ENCODE measurements at regions of chr17 and their contacts with region 1.

Region 1: GRCh38 chr17:42609182-42609813 is at the starts of genes RETREG3 and TUBG1:
- DNase-seq: peak; percentile 97 to 100 (median 100)
- ATAC-seq: peak; percentile 95
- H3K4me3 ChIP-seq: peak within 1 kb of the TSS; percentile 85
- H3K4me3 Mint-ChIP-seq: peak within 1 kb of the TSS; percentile 95 to 100 (median 100)
- H3K27ac ChIP-seq: peak within 1 kb of the TSS; percentile 89
- H3K27ac Mint-ChIP-seq: peak within 1 kb of the TSS; percentile 94 to 100 (median 97)
- H3K4me1 ChIP-seq: peaks cover 30 to 37% of the 10 kb centered on the region in 2 donors
- H3K4me1 Mint-ChIP-seq: peaks cover 38 to 55% (median 41%) of the 10 kb centered on the region in 7 donors
- H3K27me3 ChIP-seq: no peaks in the 10 kb centered on the region
- H3K27me3 Mint-ChIP-seq: peaks cover 0 to 2% (median 0%) of the 10 kb centered on the region in 5 donors
- total RNA-seq, gene RETREG3: 53.3 to 132 (median 75.7) TPM
- total RNA-seq, gene TUBG1: 7.8 to 54.4 (median 12.5) TPM

Region 2: GRCh38 chr17:41966463-41967140 is 642.7 kb before region 1 on chr17 and contains the start of gene CNP:
- CTCF ChIA-PET with region 1: no interaction called
- POLR2A ChIA-PET with region 1: no interaction called
- intact Hi-C with region 1: loop called in 1 of 2 experiments (anchors 2 kb)
- DNase-seq: peak; percentile 84 to 94 (median 88)
- ATAC-seq: peak; percentile 94
- H3K4me3 ChIP-seq: peak within 1 kb of the TSS; percentile 87
- H3K4me3 Mint-ChIP-seq: peak within 1 kb of the TSS; percentile 78 to 93 (median 88)
- H3K27ac ChIP-seq: peak within 1 kb of the TSS; percentile 88
- H3K27ac Mint-ChIP-seq: peak within 1 kb of the TSS; percentile 83 to 96 (median 89)
- H3K4me1 ChIP-seq: peaks cover 10 to 16% of the 10 kb centered on the region in 2 donors
- H3K4me1 Mint-ChIP-seq: peaks cover 24 to 51% (median 36%) of the 10 kb centered on the region in 7 donors
- H3K27me3 ChIP-seq: no peaks in the 10 kb centered on the region
- H3K27me3 Mint-ChIP-seq: peaks cover 0 to 2% (median 0%) of the 10 kb centered on the region in 5 donors
- total RNA-seq, gene CNP: 29.6 to 86.3 (median 32.5) TPM

Region 3: DNA sequence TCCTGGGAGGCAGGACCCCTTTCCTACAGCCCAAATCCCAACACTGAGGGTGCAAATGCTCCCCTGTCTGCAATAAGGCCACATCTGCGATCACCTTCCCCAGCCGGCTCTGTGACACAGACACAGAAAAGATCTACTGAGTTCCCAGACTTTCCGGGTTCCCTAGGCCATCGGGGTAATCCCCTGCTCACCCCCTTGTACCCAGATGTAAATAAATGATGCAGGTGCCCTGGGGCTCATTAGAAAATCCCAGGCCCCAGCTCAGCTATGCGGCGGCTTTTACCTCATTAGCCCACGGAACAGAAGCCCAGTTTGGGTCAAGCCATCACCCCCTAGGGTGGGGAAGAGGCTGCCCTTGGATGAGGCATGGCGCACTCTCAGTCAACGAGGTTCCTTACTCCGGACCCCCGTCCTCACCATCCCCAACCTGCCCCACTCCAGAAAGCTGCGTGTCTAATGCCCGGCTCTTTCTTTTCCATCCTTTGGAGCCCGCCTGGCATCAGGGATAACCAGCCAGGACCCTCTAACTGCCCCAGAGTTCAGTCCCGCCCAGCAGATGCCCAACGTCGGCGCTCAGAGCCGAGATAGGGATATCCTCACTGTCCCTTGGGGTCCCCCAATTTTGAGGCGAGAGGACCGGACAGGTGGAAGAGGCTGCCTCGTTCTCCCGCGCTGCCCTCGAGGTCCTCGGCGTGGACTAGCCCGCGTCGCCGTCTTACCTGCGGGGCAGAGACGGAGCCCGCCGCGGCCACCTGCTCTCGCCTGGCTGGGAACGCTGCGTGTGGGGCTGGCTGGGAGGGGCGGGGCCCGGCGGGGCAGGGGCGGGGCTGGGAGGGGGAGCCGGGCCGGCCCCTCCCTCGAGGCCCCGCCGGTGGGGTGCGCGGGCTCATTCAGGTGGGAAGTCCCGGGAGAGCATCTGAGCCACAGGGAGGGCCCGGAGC is 511.3 kb before region 1 on chr17 and contains the start of gene ZNF385C:
- CTCF ChIA-PET with region 1: no interaction called
- POLR2A ChIA-PET with region 1: no interaction called
- intact Hi-C with region 1: no loop called
- DNase-seq: peak in 5 of 9 donors; percentile 24 to 59 (median 36)
- ATAC-seq: peak; percentile 79
- H3K4me3 ChIP-seq: peak within 1 kb of the TSS; percentile 39
- H3K4me3 Mint-ChIP-seq: peak within 1 kb of the TSS; percentile 38 to 78 (median 60)
- H3K27ac ChIP-seq: no peak within 1 kb of the TSS
- H3K27ac Mint-ChIP-seq: peak within 1 kb of the TSS in 1 of 9 donors; percentile 3
- H3K4me1 ChIP-seq: peaks cover 6 to 8% of the 10 kb centered on the region in 2 donors
- H3K4me1 Mint-ChIP-seq: peaks cover 0 to 12% (median 8%) of the 10 kb centered on the region in 7 donors
- H3K27me3 ChIP-seq: no peaks in the 10 kb centered on the region
- H3K27me3 Mint-ChIP-seq: peaks cover 0 to 26% (median 17%) of the 10 kb centered on the region in 5 donors
- total RNA-seq, gene ZNF385C: 0.15 to 0.45 (median 0.23) TPM in 4 of 5 experiments, not detected in the other

Region 4: DNA sequence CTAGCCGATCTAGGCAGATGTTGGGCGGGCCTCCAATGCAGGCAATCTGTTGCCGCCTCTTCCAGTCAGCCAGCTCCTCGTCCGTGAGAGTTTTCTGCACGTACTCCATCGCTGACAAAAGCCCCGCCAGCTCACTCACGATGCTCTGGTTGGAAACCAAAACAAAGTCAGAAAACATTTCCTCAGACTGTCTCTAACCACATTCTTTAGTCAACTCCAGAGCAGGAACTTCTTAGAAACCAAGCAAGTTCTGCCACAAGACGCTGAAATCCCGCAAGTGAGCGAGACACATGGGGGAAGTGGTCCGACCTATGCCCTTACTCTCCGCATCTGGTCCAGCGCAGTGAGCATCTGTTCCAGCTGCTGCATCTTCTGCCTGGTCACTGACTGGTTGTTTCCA is 271.9 kb before region 1 on chr17:
- CTCF ChIA-PET with region 1: no interaction called
- POLR2A ChIA-PET with region 1: no interaction called
- intact Hi-C with region 1: no loop called
- DNase-seq: peak; percentile 23 to 87 (median 80)
- ATAC-seq: peak; percentile 92
- H3K4me3 ChIP-seq: no peak overlapping the region
- H3K4me3 Mint-ChIP-seq: peak overlapping the region; percentile 52 to 84 (median 72)
- H3K27ac ChIP-seq: peak overlapping the region; percentile 77
- H3K27ac Mint-ChIP-seq: peak overlapping the region; percentile 85 to 98 (median 93)
- H3K4me1 ChIP-seq: peaks cover 11 to 29% of the 10 kb centered on the region in 2 donors
- H3K4me1 Mint-ChIP-seq: peaks cover 18 to 73% (median 38%) of the 10 kb centered on the region in 7 donors
- H3K27me3 ChIP-seq: no peaks in the 10 kb centered on the region
- H3K27me3 Mint-ChIP-seq: no peaks in the 10 kb centered on the region

Region 5: GRCh38 chr17:42422958-42423712 is 186.2 kb before region 1 on chr17 and contains the start of gene CAVIN1:
- CTCF ChIA-PET with region 1: no interaction called
- POLR2A ChIA-PET with region 1: no interaction called
- intact Hi-C with region 1: no loop called
- DNase-seq: peak in 1 of 9 donors; percentile 49
- ATAC-seq: peak; percentile 38
- H3K4me3 ChIP-seq: peak within 1 kb of the TSS; percentile 65
- H3K4me3 Mint-ChIP-seq: peak within 1 kb of the TSS; percentile 83 to 96 (median 88)
- H3K27ac ChIP-seq: no peak within 1 kb of the TSS
- H3K27ac Mint-ChIP-seq: peak within 1 kb of the TSS in 5 of 9 donors; percentile 28 to 69 (median 46)
- H3K4me1 ChIP-seq: peaks cover 0 to 14% of the 10 kb centered on the region in 2 donors
- H3K4me1 Mint-ChIP-seq: peaks cover 6 to 29% (median 14%) of the 10 kb centered on the region in 7 donors
- H3K27me3 ChIP-seq: peaks cover 6 to 9% of the 10 kb centered on the region in 2 donors
- H3K27me3 Mint-ChIP-seq: peaks cover 0 to 65% (median 14%) of the 10 kb centered on the region in 5 donors
- total RNA-seq, gene CAVIN1: 0.32 to 3.8 (median 1.1) TPM in 3 of 5 experiments, not detected in the others

Region 6: DNA sequence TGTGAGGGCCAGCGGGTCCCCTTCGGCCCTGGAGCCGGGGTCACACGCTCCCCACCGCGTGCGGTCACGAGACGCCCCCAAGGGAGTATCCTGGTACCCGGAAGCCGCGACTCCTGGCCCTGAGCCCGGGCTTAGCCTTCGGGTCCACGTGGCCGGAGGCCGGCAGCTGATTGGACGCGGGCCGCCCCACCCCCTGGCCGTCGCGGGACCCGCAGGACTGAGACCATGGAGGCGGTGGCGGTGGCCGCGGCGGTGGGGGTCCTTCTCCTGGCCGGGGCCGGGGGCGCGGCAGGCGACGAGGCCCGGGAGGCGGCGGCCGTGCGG is 73.3 kb before region 1 on chr17 and contains the start of gene NAGLU:
- CTCF ChIA-PET with region 1: no interaction called
- POLR2A ChIA-PET with region 1: interaction called, 3 read pairs
- intact Hi-C with region 1: loop called in 1 of 2 experiments (anchors 2 kb)
- DNase-seq: peak; percentile 56 to 93 (median 69)
- ATAC-seq: peak; percentile 91
- H3K4me3 ChIP-seq: peak within 1 kb of the TSS; percentile 71
- H3K4me3 Mint-ChIP-seq: peak within 1 kb of the TSS; percentile 75 to 96 (median 86)
- H3K27ac ChIP-seq: peak within 1 kb of the TSS; percentile 57
- H3K27ac Mint-ChIP-seq: peak within 1 kb of the TSS; percentile 36 to 92 (median 79)
- H3K4me1 ChIP-seq: peaks cover 14 to 24% of the 10 kb centered on the region in 2 donors
- H3K4me1 Mint-ChIP-seq: peaks cover 29 to 50% (median 42%) of the 10 kb centered on the region in 7 donors
- H3K27me3 ChIP-seq: no peaks in the 10 kb centered on the region
- H3K27me3 Mint-ChIP-seq: peaks cover 0 to 9% (median 0%) of the 10 kb centered on the region in 5 donors
- total RNA-seq, gene NAGLU: 18.0 to 27.1 (median 22.3) TPM

Region 7: DNA sequence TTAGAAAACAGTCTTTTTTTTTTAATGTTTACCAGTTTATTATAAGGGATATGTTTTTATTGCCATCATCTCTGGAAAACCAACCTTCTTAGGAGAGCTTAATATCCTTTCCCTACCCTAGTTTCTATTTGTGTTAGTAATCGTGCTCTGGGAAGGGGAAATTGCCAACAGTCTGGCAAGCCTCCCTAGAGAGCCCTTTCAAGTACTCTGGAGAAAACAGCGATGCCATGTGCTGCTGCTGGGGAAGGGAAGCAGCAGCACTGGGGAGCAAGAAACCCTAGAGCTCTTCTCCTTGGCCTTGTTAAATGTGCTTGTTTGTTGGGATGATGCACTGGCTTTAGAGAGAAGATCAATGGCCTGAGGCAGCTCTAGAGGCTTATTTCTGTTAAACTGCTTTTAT is 10.4 kb before region 1 on chr17:
- CTCF ChIA-PET with region 1: interaction called, 3 read pairs
- POLR2A ChIA-PET with region 1: interaction called, 25 read pairs
- intact Hi-C with region 1: no loop called
- DNase-seq: no peak
- ATAC-seq: no peak
- H3K4me3 ChIP-seq: no peak overlapping the region
- H3K4me3 Mint-ChIP-seq: peak overlapping the region in 7 of 10 donors; percentile 17 to 65 (median 38)
- H3K27ac ChIP-seq: no peak overlapping the region
- H3K27ac Mint-ChIP-seq: peak overlapping the region in 5 of 9 donors; percentile 19 to 71 (median 33)
- H3K4me1 ChIP-seq: peaks cover 0 to 7% of the 10 kb centered on the region in 2 donors
- H3K4me1 Mint-ChIP-seq: peaks cover 13 to 48% (median 41%) of the 10 kb centered on the region in 7 donors
- H3K27me3 ChIP-seq: no peaks in the 10 kb centered on the region
- H3K27me3 Mint-ChIP-seq: no peaks in the 10 kb centered on the region

Region 8: GRCh38 chr17:42819944-42820535 is 210.7 kb after region 1 on chr17:
- CTCF ChIA-PET with region 1: no interaction called
- POLR2A ChIA-PET with region 1: interaction called, 6 read pairs
- intact Hi-C with region 1: loop called in 1 of 2 experiments (anchors 1 kb)
- DNase-seq: peak; percentile 16 to 57 (median 34)
- ATAC-seq: no peak
- H3K4me3 ChIP-seq: no peak overlapping the region
- H3K4me3 Mint-ChIP-seq: peak overlapping the region in 2 of 10 donors; percentile 1 to 22
- H3K27ac ChIP-seq: peak overlapping the region; percentile 40
- H3K27ac Mint-ChIP-seq: peak overlapping the region in 4 of 9 donors; percentile 6 to 43 (median 27)
- H3K4me1 ChIP-seq: peaks cover 6 to 12% of the 10 kb centered on the region in 2 donors
- H3K4me1 Mint-ChIP-seq: peaks cover 19 to 42% (median 28%) of the 10 kb centered on the region in 7 donors
- H3K27me3 ChIP-seq: no peaks in the 10 kb centered on the region
- H3K27me3 Mint-ChIP-seq: no peaks in the 10 kb centered on the region

Region 9: DNA sequence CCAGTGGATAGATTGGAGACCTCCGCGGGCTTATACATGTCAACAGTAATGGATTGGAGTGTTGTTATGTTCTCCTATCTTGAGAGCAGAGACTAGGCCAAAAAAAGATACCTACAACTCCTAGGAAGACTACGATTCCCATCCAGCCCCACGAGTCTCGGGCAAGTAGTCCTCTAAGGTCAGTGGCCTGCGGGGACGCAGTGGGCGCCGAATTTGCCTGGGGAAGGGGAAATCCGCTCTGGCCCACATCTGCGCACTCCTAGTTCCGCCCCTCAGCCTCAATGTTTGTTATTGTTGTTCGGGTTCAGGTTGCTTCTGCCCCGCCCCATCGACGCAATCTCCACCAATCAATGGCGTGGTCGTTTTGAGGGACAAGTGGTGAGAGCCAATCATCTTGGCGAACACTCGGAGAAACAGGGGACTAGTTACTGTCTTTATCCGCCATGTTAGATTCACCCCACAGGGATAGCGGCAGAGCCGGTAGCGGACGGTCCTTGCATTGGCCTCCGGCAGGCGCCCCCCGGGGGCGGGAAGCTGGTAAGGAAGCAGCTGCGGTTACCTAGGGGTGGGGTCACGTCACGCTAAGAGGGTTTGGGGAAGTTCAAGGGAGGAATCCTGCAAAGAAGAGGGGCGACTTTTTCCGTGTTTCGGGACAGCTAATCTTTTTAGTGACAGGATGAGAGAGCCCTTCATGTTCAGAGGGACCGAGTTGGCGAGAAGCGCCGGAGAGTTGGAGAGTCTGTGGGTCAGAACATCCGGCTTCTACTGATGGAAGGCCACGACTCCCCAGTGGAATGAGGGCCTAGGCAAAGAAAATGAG is 561.7 kb after region 1 on chr17 and contains the start of gene NBR1:
- CTCF ChIA-PET with region 1: no interaction called
- POLR2A ChIA-PET with region 1: no interaction called
- intact Hi-C with region 1: loop called in 1 of 2 experiments (anchors 1 kb)
- DNase-seq: peak; percentile 78 to 98 (median 97)
- ATAC-seq: peak; percentile 85
- H3K4me3 ChIP-seq: peak within 1 kb of the TSS; percentile 64
- H3K4me3 Mint-ChIP-seq: no peak within 1 kb of the TSS
- H3K27ac ChIP-seq: peak within 1 kb of the TSS; percentile 97
- H3K27ac Mint-ChIP-seq: no peak within 1 kb of the TSS
- H3K4me1 ChIP-seq: peaks cover 30 to 33% of the 10 kb centered on the region in 2 donors
- H3K4me1 Mint-ChIP-seq: peaks cover 21 to 46% (median 32%) of the 10 kb centered on the region in 7 donors
- H3K27me3 ChIP-seq: no peaks in the 10 kb centered on the region
- H3K27me3 Mint-ChIP-seq: no peaks in the 10 kb centered on the region
- total RNA-seq, gene NBR1: 44.6 to 83.0 (median 64.3) TPM

Measured in naive thymus-derived CD4-positive, alpha-beta T cell (primary cell).